Endothelial cell of umbilical vein (primary cell): ENCODE measurements at regions of chr9 and their contacts with region 1.

Region 1: DNA sequence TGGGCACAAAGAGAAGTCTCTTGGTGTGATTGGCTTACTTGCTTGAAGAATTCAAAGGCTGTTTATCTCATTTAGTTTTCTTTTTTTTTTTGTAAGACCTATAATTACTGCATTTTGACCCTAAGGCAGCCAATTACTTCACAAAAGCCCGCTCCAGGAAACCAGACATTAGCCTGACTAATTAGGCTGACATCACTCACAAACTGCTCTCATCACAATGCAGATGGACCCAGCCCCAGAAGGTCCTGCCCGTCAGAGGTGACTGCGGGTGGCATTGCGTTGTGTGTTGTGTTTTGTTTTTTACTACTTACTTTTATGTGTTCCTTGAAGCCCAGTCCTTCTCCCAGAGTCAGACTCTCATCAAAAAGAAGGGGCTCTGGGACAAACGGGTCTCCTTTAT is 172.3 kb downstream of the HSD17B3 start:
- DNase-seq: peak; percentile 86
- H3K4me3 ChIP-seq: peak overlapping the region in 1 of 3 experiments; percentile 35
- H3K27ac ChIP-seq: peak overlapping the region; percentile 77
- H3K4me1 ChIP-seq: peaks cover 33% of the 10 kb centered on the region
- H3K27me3 ChIP-seq: no peaks in the 10 kb centered on the region
- CTCF ChIP-seq: no peak
- POLR2A ChIP-seq: no peak

Region 2: GRCh38 chr9:96061293-96061987 is 68.3 kb before region 1 on chr9:
- CTCF ChIA-PET with region 1: no interaction called
- POLR2A ChIA-PET with region 1: no interaction called
- dilution Hi-C with region 1: no loop called
- intact Hi-C with region 1: loop called (anchors 5 kb)
- DNase-seq: peak; percentile 65
- H3K4me3 ChIP-seq: no peak overlapping the region
- H3K27ac ChIP-seq: no peak overlapping the region
- H3K4me1 ChIP-seq: peaks cover 9% of the 10 kb centered on the region
- H3K27me3 ChIP-seq: no peaks in the 10 kb centered on the region
- CTCF ChIP-seq: peak; percentile 55 to 57
- POLR2A ChIP-seq: no peak

Region 3: DNA sequence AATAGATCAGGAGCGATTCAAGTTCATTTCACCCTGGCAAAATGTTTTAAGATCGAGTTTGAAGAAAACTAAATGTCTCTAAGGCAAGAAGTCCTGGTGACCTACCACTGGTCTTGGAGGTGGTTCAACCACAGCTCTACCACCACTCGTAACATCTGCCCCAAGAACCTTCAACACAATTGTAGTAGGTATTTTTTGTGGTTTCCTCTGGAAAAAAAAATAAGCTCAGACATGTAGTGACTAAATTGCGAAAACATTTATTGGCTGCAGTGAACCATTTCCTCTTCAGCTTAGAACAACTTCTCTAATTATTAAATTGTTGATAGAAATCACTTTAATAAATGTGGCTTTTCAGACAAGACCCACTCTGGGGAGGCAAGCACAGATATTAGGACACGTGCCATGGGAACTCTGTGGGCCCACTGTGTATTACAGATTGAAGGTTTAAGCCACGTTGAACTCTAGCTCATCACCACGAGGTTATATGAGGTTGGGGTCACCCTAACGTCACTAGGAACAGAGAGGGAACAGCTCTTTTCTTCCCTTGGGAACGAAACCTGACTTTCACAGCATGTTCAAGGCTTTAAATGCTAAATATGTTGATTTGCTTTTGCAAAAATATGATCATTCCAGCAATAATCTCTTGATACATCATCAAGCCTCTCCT is 29.3 kb after region 1 on chr9:
- CTCF ChIA-PET with region 1: no interaction called
- POLR2A ChIA-PET with region 1: no interaction called
- dilution Hi-C with region 1: no loop called
- intact Hi-C with region 1: loop called (anchors 2 kb)
- DNase-seq: peak; percentile 37
- H3K4me3 ChIP-seq: no peak overlapping the region
- H3K27ac ChIP-seq: no peak overlapping the region
- H3K4me1 ChIP-seq: peaks cover 12% of the 10 kb centered on the region
- H3K27me3 ChIP-seq: no peaks in the 10 kb centered on the region
- CTCF ChIP-seq: no peak
- POLR2A ChIP-seq: no peak